Mammary epithelial cell (primary cell): ENCODE measurements at regions of chr19 and their contacts with region 1.

Region 1: DNA sequence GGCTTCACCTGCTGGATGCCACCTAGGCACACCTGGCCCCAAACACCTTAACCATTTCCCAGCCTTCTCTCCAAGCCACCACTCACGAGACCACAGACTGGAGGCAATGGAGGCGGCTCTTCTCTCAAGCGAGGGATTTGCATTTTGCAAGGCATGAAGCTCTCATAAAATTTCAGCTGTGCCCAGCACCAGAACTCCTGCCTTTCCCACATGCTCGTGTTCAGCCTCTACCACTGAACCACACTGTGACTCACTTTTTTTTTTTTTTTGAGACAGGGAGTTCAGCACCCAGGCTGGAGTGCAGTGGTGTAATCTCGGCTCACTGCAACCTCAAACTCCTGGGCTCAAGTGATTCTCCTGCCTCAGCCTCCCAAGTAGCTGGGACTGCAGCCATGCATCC is 10.6 kb downstream of the NANOS3 start:
- DNase-seq: peak; percentile 83
- H3K4me3 ChIP-seq: no peak overlapping the region
- H3K27ac ChIP-seq: no peak overlapping the region
- H3K4me1 ChIP-seq: peaks cover 39% of the 10 kb centered on the region
- H3K27me3 ChIP-seq: no peaks in the 10 kb centered on the region
- CTCF ChIP-seq: no peak

Region 2: GRCh38 chr19:13833330-13834243 is 53.9 kb before region 1 on chr19:
- CTCF ChIA-PET with region 1: no interaction called
- dilution Hi-C with region 1: loop called (anchors 5 kb)
- in situ Hi-C with region 1: no loop called
- intact Hi-C with region 1: no loop called
- DNase-seq: peak; percentile 87
- H3K4me3 ChIP-seq: no peak overlapping the region
- H3K27ac ChIP-seq: peak overlapping the region; percentile 64
- H3K4me1 ChIP-seq: peaks cover 26% of the 10 kb centered on the region
- H3K27me3 ChIP-seq: no peaks in the 10 kb centered on the region
- CTCF ChIP-seq: peak; percentile 35 to 64

Region 3: GRCh38 chr19:13995017-13995728 is 107.7 kb after region 1 on chr19:
- CTCF ChIA-PET with region 1: no interaction called
- dilution Hi-C with region 1: loop called (anchors 5 kb)
- in situ Hi-C with region 1: no loop called
- intact Hi-C with region 1: no loop called
- DNase-seq: no peak
- H3K4me3 ChIP-seq: no peak overlapping the region
- H3K27ac ChIP-seq: no peak overlapping the region
- H3K4me1 ChIP-seq: no peaks in the 10 kb centered on the region
- H3K27me3 ChIP-seq: no peaks in the 10 kb centered on the region
- CTCF ChIP-seq: no peak

Region 4: GRCh38 chr19:14081325-14082093 is 194.0 kb after region 1 on chr19:
- CTCF ChIA-PET with region 1: no interaction called
- dilution Hi-C with region 1: loop called (anchors 5 kb)
- in situ Hi-C with region 1: no loop called
- intact Hi-C with region 1: no loop called
- DNase-seq: peak; percentile 98
- H3K4me3 ChIP-seq: peak overlapping the region; percentile 68 to 95 (median 72)
- H3K27ac ChIP-seq: peak overlapping the region; percentile 79
- H3K4me1 ChIP-seq: peaks cover 9% of the 10 kb centered on the region
- H3K27me3 ChIP-seq: no peaks in the 10 kb centered on the region
- CTCF ChIP-seq: no peak

Region 5: GRCh38 chr19:14413693-14414181 is 526.2 kb after region 1 on chr19:
- CTCF ChIA-PET with region 1: no interaction called
- dilution Hi-C with region 1: loop called (anchors 5 kb)
- in situ Hi-C with region 1: loop called in 1 of 2 experiments (anchors 25 kb)
- intact Hi-C with region 1: no loop called
- DNase-seq: no peak
- H3K4me3 ChIP-seq: no peak overlapping the region
- H3K27ac ChIP-seq: no peak overlapping the region
- H3K4me1 ChIP-seq: peaks cover 16% of the 10 kb centered on the region
- H3K27me3 ChIP-seq: no peaks in the 10 kb centered on the region
- CTCF ChIP-seq: no peak